PC-9 (cell line): ENCODE measurements at regions of chr2 and their contacts with region 1.

Region 1: GRCh38 chr2:121530212-121530705 is 421 bp upstream of the RNU4ATAC start:
- DNase-seq: peak; percentile 68 to 81
- H3K4me3 ChIP-seq: peak overlapping the region; percentile 66
- H3K27ac ChIP-seq: peak overlapping the region; percentile 95
- H3K4me1 ChIP-seq: peaks cover 30% of the 10 kb centered on the region
- H3K27me3 ChIP-seq: no peaks in the 10 kb centered on the region
- CTCF ChIP-seq: no peak

Region 2: GRCh38 chr2:121400201-121400600 is 130.1 kb before region 1 on chr2:
- CTCF ChIA-PET with region 1: no interaction called
- POLR2A ChIA-PET with region 1: no interaction called
- intact Hi-C with region 1: loop called (anchors 1 kb)
- DNase-seq: no peak
- H3K4me3 ChIP-seq: no peak overlapping the region
- H3K27ac ChIP-seq: no peak overlapping the region
- H3K4me1 ChIP-seq: no peaks in the 10 kb centered on the region
- H3K27me3 ChIP-seq: no peaks in the 10 kb centered on the region
- CTCF ChIP-seq: no peak

Region 3: DNA sequence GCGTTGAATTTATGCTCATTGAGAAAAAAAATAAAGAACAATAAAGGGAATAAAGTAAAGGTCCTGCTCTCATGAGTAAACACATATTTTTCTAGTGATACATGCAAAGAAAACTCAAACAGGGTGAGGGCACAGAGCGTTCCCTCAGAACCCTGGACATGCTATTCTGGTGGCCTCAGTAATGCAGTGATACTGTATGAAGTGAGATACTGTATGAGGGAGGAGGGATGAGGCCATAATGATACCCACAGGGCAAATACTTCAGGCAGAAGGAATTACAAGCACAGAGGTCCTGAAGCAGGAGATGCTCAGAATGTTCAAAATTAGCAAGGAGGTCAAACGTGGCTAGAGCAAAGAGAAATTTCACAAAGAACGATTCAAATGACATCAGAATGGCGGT is 28.0 kb before region 1 on chr2:
- CTCF ChIA-PET with region 1: no interaction called
- POLR2A ChIA-PET with region 1: no interaction called
- intact Hi-C with region 1: loop called (anchors 2 kb)
- DNase-seq: no peak
- H3K4me3 ChIP-seq: no peak overlapping the region
- H3K27ac ChIP-seq: no peak overlapping the region
- H3K4me1 ChIP-seq: 0 out of 2 replicates have a peak, but pooled peaks cover 9% of the 10 kb centered on the region
- H3K27me3 ChIP-seq: no peaks in the 10 kb centered on the region
- CTCF ChIP-seq: no peak

Region 4: GRCh38 chr2:121649596-121650314 is 119.5 kb after region 1 on chr2:
- CTCF ChIA-PET with region 1: interaction called, 8 read pairs
- POLR2A ChIA-PET with region 1: interaction called, 21 read pairs
- intact Hi-C with region 1: loop called (anchors 1 kb)
- DNase-seq: peak; percentile 95 to 96
- H3K4me3 ChIP-seq: peak overlapping the region; percentile 69
- H3K27ac ChIP-seq: peak overlapping the region; percentile 81
- H3K4me1 ChIP-seq: peaks cover 23% of the 10 kb centered on the region
- H3K27me3 ChIP-seq: no peaks in the 10 kb centered on the region
- CTCF ChIP-seq: no peak

Region 5: GRCh38 chr2:121722479-121722878 is 192.2 kb after region 1 on chr2:
- CTCF ChIA-PET with region 1: no interaction called
- POLR2A ChIA-PET with region 1: interaction called, 12 read pairs
- intact Hi-C with region 1: loop called (anchors 1 kb)
- DNase-seq: peak in 1 of 2 experiments; percentile 70
- H3K4me3 ChIP-seq: no peak overlapping the region
- H3K27ac ChIP-seq: peak overlapping the region; percentile 42
- H3K4me1 ChIP-seq: peaks cover 13% of the 10 kb centered on the region; the same call in 1 of the 2 replicates
- H3K27me3 ChIP-seq: no peaks in the 10 kb centered on the region
- CTCF ChIP-seq: no peak

Region 6: DNA sequence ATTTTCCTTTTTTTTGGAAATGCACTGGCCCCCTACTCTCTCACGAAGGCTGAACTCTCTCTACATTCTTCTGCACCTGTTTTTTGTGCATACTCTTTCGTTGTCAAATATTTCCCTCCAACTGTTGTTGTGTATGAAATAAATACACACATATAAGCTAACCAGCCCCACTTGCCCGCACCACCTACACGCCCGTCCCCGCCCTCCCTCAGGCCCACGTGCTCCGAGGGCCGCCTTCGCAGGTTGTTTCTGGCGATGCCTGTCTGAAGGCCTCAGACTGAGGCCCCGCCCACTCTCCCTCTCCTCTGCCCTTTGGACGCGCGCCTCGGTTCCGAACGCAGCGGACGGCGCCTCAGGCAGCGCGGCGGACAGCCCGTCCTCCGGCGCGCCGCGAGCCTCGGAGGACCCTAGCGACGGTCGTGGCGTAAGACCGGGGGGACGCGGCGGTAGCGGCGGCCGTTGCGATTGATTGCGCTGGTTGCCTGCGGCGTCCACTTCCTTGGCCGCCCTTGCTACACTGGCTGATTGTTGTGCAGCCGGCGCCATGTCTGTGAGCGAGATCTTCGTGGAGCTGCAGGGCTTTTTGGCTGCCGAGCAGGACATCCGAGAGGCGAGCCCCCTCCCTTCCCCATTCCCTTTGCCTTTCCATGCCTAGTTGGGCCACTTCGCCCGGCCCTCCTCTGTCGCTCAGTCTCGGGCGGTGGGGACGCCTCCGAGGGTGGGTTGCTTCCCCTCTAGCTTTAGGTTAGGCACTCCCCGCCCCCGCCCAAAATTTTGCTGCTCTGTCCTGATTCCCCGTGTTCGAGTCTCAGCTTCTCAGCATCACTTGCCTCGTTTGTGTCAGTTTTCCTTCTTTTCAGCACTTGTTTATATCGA is 225.2 kb after region 1 on chr2 and contains the start of gene TSN:
- CTCF ChIA-PET with region 1: interaction called, 4 read pairs
- POLR2A ChIA-PET with region 1: no interaction called
- intact Hi-C with region 1: loop called (anchors 1 kb)
- DNase-seq: peak; percentile 95 to 98
- H3K4me3 ChIP-seq: peak within 1 kb of the TSS; percentile 86
- H3K27ac ChIP-seq: peak within 1 kb of the TSS; percentile 52
- H3K4me1 ChIP-seq: peaks cover 19% of the 10 kb centered on the region
- H3K27me3 ChIP-seq: no peaks in the 10 kb centered on the region
- CTCF ChIP-seq: no peak
- total RNA-seq, gene TSN: 69.8 and 70.4 TPM in 2 replicates